ENCODE measurements at regions of chr5 and their contacts with region 1.

Region 1: GRCh38 chr5:146653560-146653959 is 137.6 kb upstream of the GPR151 start:
- DNase-seq: no peak

Region 2: GRCh38 chr5:146541958-146542849 is 111.4 kb before region 1 on chr5:
- intact Hi-C with region 1: no loop called
- DNase-seq: peak; percentile 91

Region 3: GRCh38 chr5:146690880-146691355 is 37.4 kb after region 1 on chr5:
- intact Hi-C with region 1: no loop called
- DNase-seq: no peak

Region 4: GRCh38 chr5:146965761-146966659 is 312.4 kb after region 1 on chr5:
- intact Hi-C with region 1: loop called (anchors 10 kb)
- DNase-seq: no peak